Posterior vena cava (tissue), 2 donors: ENCODE measurements at regions of chr16 and their contacts with region 1.

Region 1: GRCh38 chr16:26102369-26102768 is 410.6 kb downstream of the HS3ST4 start:
- DNase-seq: no peak

Region 2: DNA sequence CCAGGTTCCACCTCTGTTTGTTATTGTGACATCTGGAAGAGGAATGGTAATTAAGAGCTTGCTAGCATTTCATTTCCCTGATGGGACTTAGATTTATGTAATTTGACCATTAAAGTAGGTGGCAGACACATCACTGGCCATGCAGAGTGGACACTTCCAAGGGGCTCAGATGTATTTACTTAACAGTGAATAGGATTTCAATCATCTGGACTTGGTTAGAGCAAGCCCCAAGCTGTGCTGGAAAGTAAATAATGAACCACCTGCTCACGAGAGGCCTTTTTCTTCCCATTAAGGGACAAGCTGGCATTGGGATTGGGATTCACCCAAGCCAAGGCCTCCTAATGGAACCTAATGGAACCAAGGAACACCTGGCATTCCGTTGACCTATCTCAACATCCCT is 15.3 kb before region 1 on chr16:
- intact Hi-C with region 1: loop called in 1 of 2 experiments (anchors 1 kb)
- DNase-seq: no peak

Region 3: GRCh38 chr16:26204138-26204537 is 101.8 kb after region 1 on chr16:
- intact Hi-C with region 1: no loop called
- DNase-seq: no peak